Aorta (tissue), 5 donors: ENCODE measurements at regions of chr15 and their contacts with region 1.

Region 1: DNA sequence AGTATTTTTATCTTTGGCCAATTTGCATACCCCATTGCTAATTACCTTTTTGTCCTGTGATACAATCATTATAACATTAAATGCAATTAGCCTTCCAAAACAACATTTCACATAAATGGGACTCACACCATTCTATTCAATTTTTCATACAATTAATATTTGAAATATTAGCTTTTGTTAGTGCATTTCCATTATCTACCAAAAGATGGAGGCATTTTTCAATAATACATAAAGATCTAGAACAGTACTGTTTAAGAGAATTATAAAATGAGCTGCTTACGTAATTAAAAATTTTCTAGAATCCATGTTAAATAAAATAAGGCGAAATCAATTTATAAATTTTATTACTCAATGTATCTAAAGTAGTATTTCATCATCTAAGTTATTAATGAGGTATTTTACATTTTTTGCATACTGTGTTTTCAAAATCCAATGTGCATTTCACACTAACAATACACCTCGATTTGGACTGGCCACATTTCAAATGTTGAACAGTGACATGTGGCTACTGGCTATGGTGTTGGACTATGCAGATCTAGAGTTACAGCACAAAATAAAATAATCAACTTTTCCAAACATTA is 74.3 kb downstream of the TJP1 start:
- DNase-seq: no peak
- ATAC-seq: no peak
- H3K4me3 ChIP-seq: no peak overlapping the region
- H3K27ac ChIP-seq: no peak overlapping the region
- H3K4me1 ChIP-seq: no peaks in the 10 kb centered on the region
- H3K27me3 ChIP-seq: no peaks in the 10 kb centered on the region

Region 2: GRCh38 chr15:29685155-29686078 is 62.5 kb before region 1 on chr15:
- intact Hi-C with region 1: loop called in 1 of 2 experiments (anchors 10 kb)
- DNase-seq: no peak
- ATAC-seq: no peak
- H3K4me3 ChIP-seq: no peak overlapping the region
- H3K27ac ChIP-seq: no peak overlapping the region
- H3K4me1 ChIP-seq: no peaks in the 10 kb centered on the region
- H3K27me3 ChIP-seq: no peaks in the 10 kb centered on the region

Region 3: DNA sequence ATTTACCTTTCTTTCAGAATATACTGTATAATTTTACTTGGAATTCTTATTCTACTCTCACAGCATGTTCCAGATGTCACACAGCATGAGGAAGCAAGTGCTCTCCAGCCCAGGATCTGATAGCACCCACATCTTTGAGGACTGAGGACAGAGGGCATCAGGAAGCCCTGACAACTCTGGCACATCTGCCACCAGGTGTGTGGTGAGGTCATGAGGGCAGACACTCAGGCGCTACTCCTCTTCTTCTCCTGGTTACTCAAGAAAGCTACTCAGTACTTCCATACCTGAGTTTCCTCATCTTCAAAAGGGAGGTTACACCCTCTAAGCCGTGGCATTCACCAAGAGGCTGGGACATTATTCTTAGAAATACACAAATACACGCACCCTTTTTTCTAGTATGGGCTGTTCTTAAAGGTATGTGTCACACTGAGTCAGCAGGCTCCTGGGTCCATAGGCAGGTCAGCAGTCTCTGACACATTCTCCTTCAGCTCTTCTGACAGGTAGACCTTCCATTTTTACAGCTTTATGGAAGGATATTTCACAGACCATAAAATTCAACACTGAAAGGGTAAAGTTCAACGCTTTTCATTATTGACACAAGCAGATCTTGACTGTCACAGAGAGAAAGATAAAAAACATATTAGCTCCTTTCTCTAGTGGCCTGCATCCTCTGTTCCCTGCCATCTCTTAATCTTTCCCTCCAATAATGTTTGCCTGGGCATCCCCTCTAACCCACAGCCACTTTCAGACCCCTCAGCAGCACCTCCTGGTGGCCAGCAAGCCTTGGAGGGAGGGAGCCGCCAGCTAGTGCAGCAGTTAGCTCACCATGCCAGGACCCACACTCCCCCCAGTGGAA is 177.5 kb after region 1 on chr15:
- intact Hi-C with region 1: loop called in 1 of 2 experiments (anchors 5 kb)
- DNase-seq: peak; percentile 70 to 90
- ATAC-seq: peak; percentile 85
- H3K4me3 ChIP-seq: no peak overlapping the region
- H3K27ac ChIP-seq: peak overlapping the region in 1 of 2 donors; percentile 47
- H3K4me1 ChIP-seq: peaks cover 2 to 5% of the 10 kb centered on the region in 2 donors
- H3K27me3 ChIP-seq: no peaks in the 10 kb centered on the region

Region 4: GRCh38 chr15:29935276-29936020 is 187.5 kb after region 1 on chr15:
- intact Hi-C with region 1: loop called in 1 of 2 experiments (anchors 5 kb)
- DNase-seq: no peak
- ATAC-seq: no peak
- H3K4me3 ChIP-seq: no peak overlapping the region
- H3K27ac ChIP-seq: no peak overlapping the region
- H3K4me1 ChIP-seq: no peaks in the 10 kb centered on the region
- H3K27me3 ChIP-seq: no peaks in the 10 kb centered on the region

Region 5: DNA sequence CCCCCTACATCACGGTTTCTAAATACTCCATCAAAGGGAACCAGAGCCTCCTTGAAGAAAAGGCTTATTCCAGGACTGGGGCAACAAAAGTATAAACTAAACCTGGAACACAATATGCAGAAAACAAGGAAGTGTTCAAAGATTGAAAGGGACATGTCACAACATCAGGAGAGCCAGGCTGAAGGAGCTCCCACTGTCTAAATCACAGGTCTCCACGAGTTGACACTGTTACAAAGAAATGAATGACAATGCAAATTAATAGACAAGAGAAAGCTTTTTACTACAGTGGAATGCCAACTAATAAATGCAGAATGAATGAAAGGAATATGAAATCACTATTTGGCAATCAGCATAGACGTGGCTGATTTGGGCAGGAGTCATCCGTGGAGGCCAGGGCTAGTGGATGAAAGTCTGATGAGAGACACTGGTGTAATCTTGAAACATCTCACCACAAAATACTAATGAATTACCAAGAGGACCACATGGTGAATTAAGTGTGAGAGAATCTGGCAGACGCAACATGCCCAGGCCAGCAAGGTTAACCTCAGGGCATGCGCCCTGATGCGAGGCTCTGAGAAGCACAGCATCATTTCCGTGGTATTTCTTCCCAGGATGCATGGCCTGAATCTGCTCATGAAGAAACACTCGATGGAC is 198.1 kb after region 1 on chr15:
- intact Hi-C with region 1: no loop called
- DNase-seq: no peak
- ATAC-seq: no peak
- H3K4me3 ChIP-seq: no peak overlapping the region
- H3K27ac ChIP-seq: no peak overlapping the region
- H3K4me1 ChIP-seq: no peaks in the 10 kb centered on the region
- H3K27me3 ChIP-seq: no peaks in the 10 kb centered on the region

Region 6: GRCh38 chr15:30043211-30043655 is 295.3 kb after region 1 on chr15:
- intact Hi-C with region 1: loop called in 1 of 2 experiments (anchors 10 kb)
- DNase-seq: no peak
- ATAC-seq: no peak
- H3K4me3 ChIP-seq: no peak overlapping the region
- H3K27ac ChIP-seq: no peak overlapping the region
- H3K4me1 ChIP-seq: no peaks in the 10 kb centered on the region
- H3K27me3 ChIP-seq: no peaks in the 10 kb centered on the region

Region 7: GRCh38 chr15:30073915-30074314 is 326.0 kb after region 1 on chr15:
- intact Hi-C with region 1: loop called in 1 of 2 experiments (anchors 10 kb)
- DNase-seq: no peak
- ATAC-seq: no peak
- H3K4me3 ChIP-seq: no peak overlapping the region
- H3K27ac ChIP-seq: no peak overlapping the region
- H3K4me1 ChIP-seq: no peaks in the 10 kb centered on the region
- H3K27me3 ChIP-seq: no peaks in the 10 kb centered on the region